GM10248 (cell line): ENCODE measurements at regions of chr1 and their contacts with region 1.

Region 1: DNA sequence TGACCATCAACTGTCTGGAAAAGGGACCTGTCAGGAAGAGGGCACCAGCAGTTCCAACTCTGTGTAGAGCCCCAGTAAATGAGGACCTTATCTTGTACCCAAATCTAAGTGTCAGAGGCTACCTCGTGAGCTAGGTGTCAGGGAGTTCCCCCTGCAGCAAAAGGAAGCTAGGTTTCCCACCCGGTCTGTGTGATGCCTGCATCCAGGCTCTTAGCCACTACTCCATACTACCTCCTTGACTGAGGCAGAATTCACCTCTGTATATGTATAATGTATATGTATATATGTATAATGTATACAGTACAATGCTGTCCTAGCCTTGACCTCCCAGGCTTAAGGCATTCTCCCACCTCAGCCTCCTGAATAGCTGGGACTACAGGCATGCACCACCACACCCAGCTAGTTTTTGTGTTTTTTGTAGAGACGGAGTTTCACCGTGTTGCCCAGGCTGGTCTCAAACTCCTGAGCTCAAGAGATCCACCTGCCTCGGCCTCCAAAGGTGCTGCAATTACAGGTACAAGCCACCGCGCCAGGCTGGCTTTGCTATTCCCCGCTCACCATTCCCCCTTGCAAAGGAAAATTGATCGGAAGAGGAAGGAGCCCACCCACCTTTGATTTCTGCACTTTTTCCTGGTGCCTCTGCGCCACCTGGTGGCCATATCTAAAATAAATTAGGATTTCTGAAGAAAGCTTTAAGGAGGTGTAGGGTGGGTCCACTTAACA is 15.7 kb upstream of the LUZP1 start:
- DNase-seq: peak; percentile 57
- CTCF ChIP-seq: peak; percentile 63

Region 2: GRCh38 chr1:22976461-22977243 is 207.7 kb before region 1 on chr1:
- CTCF ChIA-PET with region 1: interaction called, 95 read pairs
- POLR2A ChIA-PET with region 1: no interaction called
- DNase-seq: peak; percentile 72
- CTCF ChIP-seq: peak; percentile 87

Region 3: DNA sequence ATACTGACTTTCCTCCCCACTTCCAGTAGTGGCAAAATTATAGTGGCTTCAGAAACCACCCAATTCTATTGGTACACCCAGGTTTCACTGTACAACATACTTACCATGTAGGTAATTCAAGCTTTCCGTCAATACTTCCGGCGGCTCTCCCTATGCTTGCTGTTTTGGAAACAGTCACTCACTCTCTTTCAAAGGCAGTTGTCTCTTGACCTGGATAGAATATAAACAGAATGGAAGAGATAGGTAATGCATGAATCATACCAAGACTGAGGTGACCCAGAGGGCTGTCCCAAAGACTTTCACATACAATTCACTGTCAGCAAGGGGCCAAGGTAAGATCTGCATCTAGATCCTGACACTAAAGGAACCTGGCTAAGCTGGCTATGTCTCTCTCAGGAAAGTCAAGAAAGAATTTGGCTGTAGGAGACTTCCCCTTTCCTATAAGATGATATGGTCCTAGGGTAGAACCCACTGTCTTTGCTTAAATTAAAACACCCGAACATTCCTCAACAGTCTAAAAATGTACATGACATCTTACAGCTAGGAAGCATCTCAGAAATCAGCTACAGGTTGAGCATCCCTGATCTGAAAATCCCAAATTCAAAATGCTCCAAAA is 75.3 kb before region 1 on chr1:
- CTCF ChIA-PET with region 1: interaction called, 641 read pairs
- POLR2A ChIA-PET with region 1: interaction called, 3 read pairs
- DNase-seq: no peak
- CTCF ChIP-seq: no peak

Region 4: DNA sequence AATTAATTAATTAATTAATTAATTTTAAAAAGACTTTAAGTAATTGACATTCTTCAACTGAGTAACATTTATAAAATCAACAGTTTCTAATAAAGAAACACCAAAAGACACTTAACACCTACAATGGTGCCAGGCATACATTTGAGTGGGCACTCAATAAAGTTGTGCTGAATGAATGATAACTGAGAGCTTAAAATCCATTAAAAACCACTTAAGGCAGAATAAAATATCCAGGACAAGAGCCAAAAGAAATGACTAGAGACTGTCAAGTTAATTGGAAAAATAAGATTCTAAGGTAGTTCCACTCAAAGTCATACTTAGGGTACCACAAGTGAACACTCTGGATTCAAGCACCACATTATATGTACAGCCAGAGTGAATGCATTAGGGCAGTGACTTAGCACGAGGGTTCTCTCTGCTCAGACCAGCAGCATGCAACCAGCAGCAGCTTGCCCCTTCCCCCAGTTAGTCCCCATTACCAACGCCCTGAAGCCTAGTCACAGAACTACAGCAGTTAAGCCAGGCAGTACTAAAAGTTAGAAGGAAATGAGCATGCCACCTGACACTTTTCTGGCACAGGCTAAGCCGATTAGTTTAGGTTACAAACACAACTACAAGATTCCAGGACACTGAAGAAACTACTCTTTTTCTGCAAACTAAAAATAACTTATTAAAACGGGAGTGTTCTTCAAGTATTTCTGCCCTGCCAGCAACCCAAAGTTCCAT is 62.2 kb before region 1 on chr1:
- CTCF ChIA-PET with region 1: interaction called, 21 read pairs
- POLR2A ChIA-PET with region 1: no interaction called
- DNase-seq: no peak
- CTCF ChIP-seq: no peak

Region 5: DNA sequence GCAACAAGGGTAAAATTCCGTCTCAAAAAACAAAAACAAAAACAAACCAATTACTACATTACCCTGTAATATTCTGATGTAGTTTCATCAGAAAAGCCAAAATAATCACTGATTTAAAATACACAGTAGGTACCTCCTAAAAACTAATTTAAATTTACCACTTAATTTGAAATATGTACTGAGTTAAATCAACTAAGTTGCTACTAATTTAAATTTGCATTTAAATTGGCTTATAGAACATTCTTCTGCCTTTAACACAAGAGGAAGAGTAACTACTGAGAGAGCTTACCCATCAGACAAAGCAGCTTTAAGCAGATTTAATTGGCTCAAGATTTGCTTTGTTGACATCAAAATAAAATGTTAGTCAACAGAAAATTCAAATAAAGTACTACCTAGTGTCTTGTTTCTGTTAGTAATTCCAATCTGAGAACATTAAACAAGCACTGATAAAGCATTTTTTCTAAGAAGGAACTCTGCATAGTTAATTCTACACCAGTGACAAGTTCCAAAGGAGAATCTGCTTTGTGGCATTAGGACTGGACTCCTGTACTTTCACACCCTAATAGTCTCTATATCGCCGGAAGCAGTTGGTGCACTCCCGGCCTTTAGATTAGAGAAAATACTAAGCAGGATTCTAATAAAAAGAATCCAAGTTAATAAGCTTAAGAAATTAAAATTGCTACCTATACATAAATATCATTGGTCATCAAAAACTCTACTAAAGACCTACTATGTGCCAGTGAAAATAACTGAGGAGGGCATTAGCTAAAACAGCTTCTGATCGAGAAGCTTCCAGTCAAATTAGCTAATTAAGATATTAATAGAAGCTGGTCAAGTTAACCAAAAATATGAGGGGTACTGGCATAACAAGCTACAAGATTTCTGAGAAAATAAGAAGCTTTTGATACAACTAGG is 24.2 kb before region 1 on chr1:
- CTCF ChIA-PET with region 1: interaction called, 123 read pairs
- POLR2A ChIA-PET with region 1: no interaction called
- DNase-seq: no peak
- CTCF ChIP-seq: no peak

Region 6: GRCh38 chr1:23196639-23197328 is 12.4 kb after region 1 on chr1:
- CTCF ChIA-PET with region 1: interaction called, 76 read pairs
- POLR2A ChIA-PET with region 1: interaction called, 3 read pairs
- DNase-seq: no peak
- CTCF ChIP-seq: no peak